A673 (cell line): ENCODE measurements at regions of chr4 and their contacts with region 1.

Region 1: GRCh38 chr4:153573881-153574802 is 108.0 kb downstream of the TMEM131L start:
- DNase-seq: peak; percentile 85
- H3K4me3 ChIP-seq: no peak overlapping the region
- H3K27ac ChIP-seq: no peak overlapping the region
- H3K4me1 ChIP-seq: peaks cover 18% of the 10 kb centered on the region
- H3K27me3 ChIP-seq: no peaks in the 10 kb centered on the region
- CTCF ChIP-seq: peak; percentile 81

Region 2: DNA sequence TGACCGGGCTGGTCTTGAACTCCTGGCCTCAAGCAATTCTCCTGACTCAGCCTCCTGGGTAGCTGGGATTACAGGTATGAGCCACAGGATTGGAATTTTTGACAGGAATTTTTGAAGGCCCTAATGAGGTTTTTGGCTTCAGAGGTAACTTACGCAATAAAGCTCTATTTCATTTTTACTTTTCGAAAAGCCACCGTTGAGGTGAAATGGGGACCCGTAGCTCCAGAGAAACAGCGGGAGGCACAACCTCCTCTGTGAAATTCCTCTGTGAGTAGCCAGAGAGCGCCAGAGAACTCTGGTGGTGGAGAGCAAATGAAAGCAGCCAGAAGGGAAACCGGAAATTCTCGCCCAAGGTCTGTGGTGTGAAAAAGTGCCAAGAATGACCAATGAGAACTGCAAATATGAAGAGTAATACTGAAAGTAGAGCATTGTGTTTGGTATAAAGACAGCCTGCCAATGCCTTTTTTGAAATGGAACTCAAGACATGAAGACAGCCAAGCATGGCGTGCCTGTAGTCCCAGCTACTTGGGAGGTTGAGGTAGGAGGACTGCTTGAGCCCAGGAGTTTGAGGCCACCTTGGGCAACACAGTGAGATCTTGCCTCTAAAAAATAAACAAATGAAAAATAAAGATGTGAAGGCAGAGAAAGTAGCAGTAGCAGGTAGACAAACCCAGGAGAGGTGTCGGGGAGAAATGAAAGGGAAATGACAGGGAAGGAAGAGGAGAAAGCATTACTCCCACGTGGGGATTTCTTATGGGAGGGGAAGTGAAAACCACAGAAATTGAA is 141.0 kb before region 1 on chr4:
- CTCF ChIA-PET with region 1: interaction called, 20 read pairs
- POLR2A ChIA-PET with region 1: no interaction called
- intact Hi-C with region 1: loop called (anchors 1 kb)
- DNase-seq: peak; percentile 81
- H3K4me3 ChIP-seq: no peak overlapping the region
- H3K27ac ChIP-seq: no peak overlapping the region
- H3K4me1 ChIP-seq: peaks cover 4% of the 10 kb centered on the region
- H3K27me3 ChIP-seq: no peaks in the 10 kb centered on the region
- CTCF ChIP-seq: peak; percentile 76

Region 3: DNA sequence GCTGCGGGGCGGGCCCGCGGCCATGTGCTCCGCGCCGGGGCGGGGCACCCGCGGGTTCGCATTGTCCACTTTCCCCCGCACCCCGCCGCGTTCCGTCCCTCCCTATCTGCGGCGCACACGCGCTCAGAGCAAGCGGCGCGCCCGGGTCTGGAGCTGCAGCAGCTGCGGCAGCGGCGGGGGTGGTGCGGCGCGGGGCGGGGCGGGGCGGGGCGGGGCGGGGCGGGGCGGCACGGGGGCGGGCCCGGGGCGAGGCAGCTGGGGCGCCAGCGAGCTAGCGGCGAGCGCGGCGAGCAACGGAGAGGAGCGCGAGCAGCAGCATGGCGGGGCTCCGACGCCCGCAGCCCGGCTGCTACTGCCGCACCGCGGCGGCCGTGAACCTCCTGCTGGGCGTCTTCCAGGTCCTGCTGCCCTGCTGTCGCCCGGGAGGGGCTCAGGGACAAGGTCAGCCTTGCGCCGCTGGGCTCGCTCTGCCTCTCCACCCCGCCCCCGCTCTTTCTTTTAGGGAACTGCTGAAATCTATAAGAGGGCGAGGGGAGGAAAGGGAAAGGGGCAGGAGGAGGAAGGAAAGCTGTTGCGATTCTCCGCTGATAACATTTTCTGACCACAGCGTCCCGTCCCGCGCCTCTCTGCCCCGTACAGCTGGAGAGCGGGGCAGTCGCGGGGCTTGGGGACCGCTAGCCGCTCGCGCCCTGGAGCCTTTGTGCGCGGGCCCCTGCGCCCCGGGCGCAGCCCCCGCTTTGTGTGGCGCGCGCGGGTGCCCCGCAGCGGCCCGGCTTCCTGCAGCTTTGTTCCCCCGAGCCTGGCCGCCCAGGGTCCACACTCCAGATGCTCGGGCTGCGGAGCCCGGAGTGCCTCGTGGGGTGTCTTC is 107.8 kb before region 1 on chr4 and contains the start of gene TMEM131L:
- CTCF ChIA-PET with region 1: interaction called, 6 read pairs
- POLR2A ChIA-PET with region 1: interaction called, 3 read pairs
- intact Hi-C with region 1: loop called (anchors 10 kb)
- DNase-seq: peak; percentile 85
- H3K4me3 ChIP-seq: peak within 1 kb of the TSS; percentile 91
- H3K27ac ChIP-seq: peak within 1 kb of the TSS; percentile 90
- H3K4me1 ChIP-seq: peaks cover 34% of the 10 kb centered on the region
- H3K27me3 ChIP-seq: no peaks in the 10 kb centered on the region
- CTCF ChIP-seq: no peak
- total RNA-seq, gene TMEM131L: 17.0 and 18.4 TPM in 2 replicates